ENCODE measurements at regions of chr6 and their contacts with region 1.

Region 1: GRCh38 chr6:50714487-50715379 is 1.4 kb downstream of the TFAP2D start:
- DNase-seq: no peak
- H3K4me3 ChIP-seq: no peak overlapping the region
- H3K27ac ChIP-seq: no peak overlapping the region
- H3K4me1 ChIP-seq: no peaks in the 10 kb centered on the region
- H3K27me3 ChIP-seq: peaks cover 0 to 83% of the 10 kb centered on the region in 2 donors
- CTCF ChIP-seq: no peak
- POLR2A ChIP-seq: no peak

Region 2: GRCh38 chr6:50404643-50405042 is 310.1 kb before region 1 on chr6:
- intact Hi-C with region 1: no loop called
- DNase-seq: no peak
- H3K4me3 ChIP-seq: no peak overlapping the region
- H3K27ac ChIP-seq: no peak overlapping the region
- H3K4me1 ChIP-seq: no peaks in the 10 kb centered on the region
- H3K27me3 ChIP-seq: no peaks in the 10 kb centered on the region
- CTCF ChIP-seq: no peak
- POLR2A ChIP-seq: no peak

Region 3: GRCh38 chr6:50661636-50662035 is 53.1 kb before region 1 on chr6:
- intact Hi-C with region 1: loop called (anchors 2 kb)
- DNase-seq: no peak
- H3K4me3 ChIP-seq: no peak overlapping the region
- H3K27ac ChIP-seq: no peak overlapping the region
- H3K4me1 ChIP-seq: no peaks in the 10 kb centered on the region
- H3K27me3 ChIP-seq: no peaks in the 10 kb centered on the region
- CTCF ChIP-seq: no peak
- POLR2A ChIP-seq: no peak